CD4-positive, alpha-beta T cell (primary cell): ENCODE measurements at regions of chr12 and their contacts with region 1.

Region 1: DNA sequence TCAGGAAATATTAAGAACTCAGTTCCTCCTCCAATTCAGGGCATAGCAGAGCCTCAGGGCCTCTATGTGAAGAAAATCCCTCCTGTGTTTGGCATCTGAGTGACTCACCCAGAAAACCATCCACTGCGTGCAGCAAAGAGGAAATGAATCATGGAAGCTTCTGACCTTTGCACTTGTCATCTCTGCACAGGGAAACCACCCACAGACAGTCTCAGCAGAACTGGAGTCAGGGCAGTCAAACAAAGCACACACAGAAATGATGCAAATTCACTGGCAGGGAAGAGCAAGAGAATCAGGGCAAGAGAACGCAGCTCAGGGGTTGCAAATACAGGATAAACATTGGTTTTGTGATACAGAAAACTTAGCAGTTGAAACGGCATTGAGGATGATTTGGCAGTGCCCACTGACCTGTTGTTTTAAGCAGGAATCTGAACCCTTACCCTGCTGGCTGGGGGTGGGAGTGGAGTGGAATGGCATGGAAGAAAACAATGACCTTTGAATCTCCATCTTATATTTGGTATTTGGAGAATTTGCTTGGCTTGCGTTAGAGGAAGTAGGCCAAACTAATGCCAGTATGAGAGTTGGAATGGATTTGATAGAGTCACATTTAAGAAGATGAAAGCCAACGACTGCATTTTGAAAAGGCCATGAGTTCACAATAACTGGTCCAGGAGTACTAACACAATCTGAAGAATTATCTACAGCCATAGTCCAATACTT is 53.5 kb downstream of the PHLDA1 start:
- DNase-seq: peak; percentile 28 to 93 (median 62)
- ATAC-seq: peak; percentile 93
- H3K4me3 ChIP-seq: no peak overlapping the region
- H3K4me3 Mint-ChIP-seq: peak overlapping the region; percentile 36
- H3K27ac ChIP-seq: peak overlapping the region; percentile 29 to 85
- H3K27ac Mint-ChIP-seq: peak overlapping the region; percentile 74
- H3K4me1 ChIP-seq: peaks cover 31% of the 10 kb centered on the region
- H3K4me1 Mint-ChIP-seq: peaks cover 37% of the 10 kb centered on the region
- H3K27me3 ChIP-seq: no peaks in the 10 kb centered on the region
- H3K27me3 Mint-ChIP-seq: no peaks in the 10 kb centered on the region
- CTCF ChIP-seq: no peak

Region 2: GRCh38 chr12:76020731-76021672 is 42.9 kb after region 1 on chr12:
- CTCF ChIA-PET with region 1: interaction called, 5 read pairs
- POLR2A ChIA-PET with region 1: interaction called, 8 read pairs
- intact Hi-C with region 1: loop called (anchors 2 to 5 kb)
- DNase-seq: peak in 12 of 14 experiments; percentile 34 to 91 (median 50)
- ATAC-seq: peak; percentile 79
- H3K4me3 ChIP-seq: peak overlapping the region; percentile 6
- H3K4me3 Mint-ChIP-seq: peak overlapping the region; percentile 26
- H3K27ac ChIP-seq: peak overlapping the region; percentile 58 to 88
- H3K27ac Mint-ChIP-seq: peak overlapping the region; percentile 89
- H3K4me1 ChIP-seq: peaks cover 26% of the 10 kb centered on the region
- H3K4me1 Mint-ChIP-seq: peaks cover 26% of the 10 kb centered on the region
- H3K27me3 ChIP-seq: no peaks in the 10 kb centered on the region
- H3K27me3 Mint-ChIP-seq: no peaks in the 10 kb centered on the region
- CTCF ChIP-seq: no peak